ENCODE measurements at regions of chr10 and their contacts with region 1.

Region 1: DNA sequence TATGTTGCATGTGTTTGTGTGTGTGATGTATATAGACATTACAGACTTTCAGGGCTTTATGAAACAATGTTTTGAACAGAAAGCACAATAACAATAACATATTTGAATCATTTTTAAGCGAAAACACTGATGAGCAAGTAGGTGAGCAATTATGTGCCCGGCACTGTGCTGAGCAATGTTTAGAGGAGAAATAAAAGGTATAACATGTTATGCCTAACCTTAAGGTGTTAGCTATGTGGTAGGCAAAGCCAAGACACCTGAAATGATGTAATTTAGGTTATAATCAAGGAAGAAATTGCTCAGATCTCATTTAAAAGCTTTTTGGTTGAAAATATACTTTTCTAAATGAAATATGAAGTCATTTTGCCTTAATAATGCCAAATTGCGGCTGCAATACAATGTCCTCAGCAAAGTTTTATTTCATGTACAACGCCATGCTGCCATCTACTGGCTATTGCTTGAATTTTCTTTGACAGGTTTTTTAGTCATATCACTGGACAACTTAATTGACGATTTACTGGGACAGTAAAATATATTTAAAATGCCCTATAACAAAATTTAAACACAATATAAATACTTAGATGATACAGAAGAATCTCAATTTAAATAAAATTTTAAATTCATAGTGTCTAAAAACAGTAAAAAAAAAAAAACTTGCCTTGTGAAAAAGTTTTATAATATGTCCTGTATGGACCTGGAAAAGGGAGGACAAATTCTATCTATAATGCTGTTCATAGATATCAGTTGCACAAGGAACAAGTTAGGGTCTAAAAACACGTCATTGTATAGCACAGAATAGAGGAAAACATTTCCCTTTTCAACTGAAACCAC is 131.1 kb upstream of the CDK1 start:
- DNase-seq: peak; percentile 32 to 75 (median 35)
- ATAC-seq: peak; percentile 86
- H3K4me3 ChIP-seq: no peak overlapping the region
- H3K27ac ChIP-seq: no peak overlapping the region
- H3K4me1 ChIP-seq: peaks cover 0 to 3% of the 10 kb centered on the region in 2 experiments; a peak in 1 of 5 replicates
- H3K27me3 ChIP-seq: no peaks in the 10 kb centered on the region
- CTCF ChIP-seq: peak; percentile 60 to 83 (median 65); a peak in 5 of 6 replicates
- EP300 ChIP-seq: no peak
- POLR2A ChIP-seq: no peak
- RAD21 ChIP-seq: peak; percentile 82 to 85

Region 2: GRCh38 chr10:60208676-60209269 is 438.4 kb before region 1 on chr10:
- CTCF ChIA-PET with region 1: interaction called, 3 read pairs
- POLR2A ChIA-PET with region 1: no interaction called
- in situ Hi-C with region 1: loop called (anchors 25 kb)
- intact Hi-C with region 1: no loop called
- DNase-seq: peak; percentile 22 to 60 (median 28)
- ATAC-seq: peak; percentile 69
- H3K4me3 ChIP-seq: no peak overlapping the region
- H3K27ac ChIP-seq: no peak overlapping the region
- H3K4me1 ChIP-seq: no peaks in the 10 kb centered on the region
- H3K27me3 ChIP-seq: no peaks in the 10 kb centered on the region
- CTCF ChIP-seq: peak; percentile 69 to 92 (median 85)
- EP300 ChIP-seq: no peak
- POLR2A ChIP-seq: no peak
- RAD21 ChIP-seq: peak; percentile 96 to 99

Region 3: DNA sequence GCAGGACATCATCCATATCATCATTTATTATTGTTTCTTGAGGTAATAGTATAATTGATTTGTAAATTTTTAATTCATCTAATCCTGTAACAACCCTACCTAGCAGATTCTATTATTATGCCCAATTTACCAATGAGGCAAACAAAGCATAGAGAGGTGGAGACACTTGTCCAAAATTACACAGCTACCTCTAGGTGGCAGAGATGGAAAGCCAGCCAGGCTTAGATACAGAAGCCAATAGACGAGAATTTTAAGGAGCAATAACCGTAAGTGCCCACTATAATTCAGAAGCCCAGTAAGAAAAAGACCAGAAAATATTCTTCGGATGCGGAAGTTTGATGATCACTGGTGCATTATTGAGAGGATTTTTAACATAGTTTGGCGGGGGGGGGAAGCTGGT is 311.5 kb before region 1 on chr10:
- CTCF ChIA-PET with region 1: no interaction called
- POLR2A ChIA-PET with region 1: no interaction called
- in situ Hi-C with region 1: no loop called
- intact Hi-C with region 1: loop called (anchors 10 kb)
- DNase-seq: peak in 1 of 4 experiments; percentile 56
- ATAC-seq: peak; percentile 88
- H3K4me3 ChIP-seq: no peak overlapping the region
- H3K27ac ChIP-seq: no peak overlapping the region
- H3K4me1 ChIP-seq: no peaks in the 10 kb centered on the region
- H3K27me3 ChIP-seq: no peaks in the 10 kb centered on the region
- CTCF ChIP-seq: peak; percentile 47 to 74 (median 55)
- EP300 ChIP-seq: no peak
- POLR2A ChIP-seq: no peak
- RAD21 ChIP-seq: peak; percentile 79 to 86

Region 4: DNA sequence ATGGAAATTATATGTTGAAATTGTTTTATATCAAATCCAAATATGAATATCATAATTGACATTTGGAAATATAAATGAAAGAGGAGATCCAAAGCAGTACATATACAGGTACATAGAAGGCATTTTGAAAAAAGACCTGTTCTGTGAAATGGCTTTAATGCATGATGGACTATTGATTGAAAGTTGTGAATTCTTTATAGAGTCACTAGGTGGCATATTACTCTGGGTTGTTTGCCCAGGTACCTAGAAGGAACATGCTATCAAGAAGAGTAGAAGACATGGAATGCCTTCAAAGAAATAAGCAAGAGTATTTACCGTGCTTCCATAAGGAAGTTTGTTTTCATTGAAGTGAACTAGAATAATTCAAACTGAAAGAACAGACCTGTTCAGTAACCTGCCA is 97.5 kb before region 1 on chr10:
- CTCF ChIA-PET with region 1: no interaction called
- POLR2A ChIA-PET with region 1: no interaction called
- in situ Hi-C with region 1: no loop called
- intact Hi-C with region 1: loop called (anchors 2 kb)
- DNase-seq: peak in 1 of 4 experiments; percentile 15
- ATAC-seq: 0 out of 3 replicates have a peak, but pooled peaks have one; percentile 38
- H3K4me3 ChIP-seq: no peak overlapping the region
- H3K27ac ChIP-seq: no peak overlapping the region
- H3K4me1 ChIP-seq: no peaks in the 10 kb centered on the region
- H3K27me3 ChIP-seq: no peaks in the 10 kb centered on the region
- CTCF ChIP-seq: peak; percentile 16 to 53 (median 23); a peak in 3 of 6 replicates
- EP300 ChIP-seq: no peak
- POLR2A ChIP-seq: no peak
- RAD21 ChIP-seq: peak; percentile 19 to 52; a peak in 2 of 4 replicates

Measured in K562 (cell line).